ENCODE measurements at regions of chr14 and their contacts with region 1.

Region 1: DNA sequence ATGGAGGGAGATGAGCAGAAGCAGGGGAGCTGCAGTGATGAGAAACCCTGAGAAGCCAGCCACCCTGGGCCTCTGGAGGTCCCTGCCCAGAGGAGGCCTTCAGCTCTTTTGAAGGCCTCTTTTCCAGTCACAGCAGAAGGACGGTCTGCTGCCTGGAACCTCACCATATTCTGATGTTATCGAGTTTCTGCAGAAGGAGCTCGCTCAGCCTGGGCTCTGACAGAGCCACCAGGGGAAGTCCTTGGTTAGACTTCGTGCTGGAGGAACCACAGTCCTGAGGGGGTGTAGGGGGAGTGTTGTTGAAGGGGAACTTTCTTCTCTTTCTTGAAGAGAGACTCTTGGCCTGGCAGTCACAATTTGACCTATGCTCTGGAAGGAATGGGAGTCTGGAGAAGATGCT is 25.1 kb upstream of the BATF start:
- DNase-seq: no peak

Region 2: GRCh38 chr14:75126679-75127473 is 370.3 kb before region 1 on chr14 and contains the start of gene NEK9:
- intact Hi-C with region 1: loop called (anchors 10 kb)
- DNase-seq: peak; percentile 92 to 99 (median 94)